ENCODE measurements at regions of chr20 and their contacts with region 1.

Region 1: GRCh38 chr20:62285722-62286121 is 17.1 kb upstream of the ADRM1 start:
- DNase-seq: no peak
- H3K4me3 ChIP-seq: no peak overlapping the region
- H3K4me3 Mint-ChIP-seq: no peak overlapping the region
- H3K27ac Mint-ChIP-seq: no peak overlapping the region
- H3K4me1 ChIP-seq: no peaks in the 10 kb centered on the region
- H3K4me1 Mint-ChIP-seq: no peaks in the 10 kb centered on the region
- H3K27me3 ChIP-seq: no peaks in the 10 kb centered on the region
- H3K27me3 Mint-ChIP-seq: no peaks in the 10 kb centered on the region
- CTCF ChIP-seq: no peak

Region 2: DNA sequence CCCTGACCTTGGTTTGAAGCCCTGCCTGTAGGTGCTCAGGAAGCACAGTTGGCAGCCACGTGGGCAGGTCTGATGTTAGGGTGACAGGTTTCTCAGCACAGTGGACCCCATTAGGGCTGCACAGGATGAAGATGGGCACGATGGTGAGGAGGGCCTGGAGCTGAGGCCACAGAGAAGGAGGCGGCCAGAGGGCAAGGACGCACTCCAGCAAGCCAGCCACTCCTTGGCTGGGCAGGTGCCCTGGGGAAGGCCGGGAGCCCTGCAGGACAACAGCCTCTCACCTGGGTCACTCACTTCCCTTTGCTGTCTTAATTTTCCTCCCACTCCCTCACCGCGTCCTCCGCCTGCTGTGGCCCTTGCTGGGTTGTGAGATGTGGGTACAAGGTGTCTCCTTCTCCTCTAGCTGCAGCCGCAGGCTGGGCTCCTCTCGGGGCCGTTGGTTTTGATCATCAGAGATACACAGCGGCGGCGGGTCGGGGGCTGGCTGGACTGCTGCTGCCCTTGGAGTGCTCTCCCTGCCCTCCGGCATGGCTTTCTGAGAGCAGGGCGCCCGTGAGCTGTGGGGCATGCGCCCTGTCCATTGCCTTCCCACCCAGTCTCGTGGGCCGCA is 41.7 kb before region 1 on chr20:
- CTCF ChIA-PET with region 1: interaction called, 10 read pairs
- POLR2A ChIA-PET with region 1: no interaction called
- intact Hi-C with region 1: no loop called
- DNase-seq: no peak
- H3K4me3 ChIP-seq: no peak overlapping the region
- H3K4me3 Mint-ChIP-seq: no peak overlapping the region
- H3K27ac Mint-ChIP-seq: no peak overlapping the region
- H3K4me1 ChIP-seq: peaks cover 5% of the 10 kb centered on the region
- H3K4me1 Mint-ChIP-seq: no peaks in the 10 kb centered on the region
- H3K27me3 ChIP-seq: no peaks in the 10 kb centered on the region
- H3K27me3 Mint-ChIP-seq: no peaks in the 10 kb centered on the region
- CTCF ChIP-seq: no peak

Region 3: GRCh38 chr20:62321521-62321948 is 35.8 kb after region 1 on chr20:
- CTCF ChIA-PET with region 1: no interaction called
- POLR2A ChIA-PET with region 1: no interaction called
- intact Hi-C with region 1: no loop called
- DNase-seq: peak; percentile 77 to 88
- H3K4me3 ChIP-seq: no peak overlapping the region
- H3K4me3 Mint-ChIP-seq: no peak overlapping the region
- H3K27ac Mint-ChIP-seq: no peak overlapping the region
- H3K4me1 ChIP-seq: no peaks in the 10 kb centered on the region
- H3K4me1 Mint-ChIP-seq: no peaks in the 10 kb centered on the region
- H3K27me3 ChIP-seq: no peaks in the 10 kb centered on the region
- H3K27me3 Mint-ChIP-seq: no peaks in the 10 kb centered on the region
- CTCF ChIP-seq: no peak

Region 4: DNA sequence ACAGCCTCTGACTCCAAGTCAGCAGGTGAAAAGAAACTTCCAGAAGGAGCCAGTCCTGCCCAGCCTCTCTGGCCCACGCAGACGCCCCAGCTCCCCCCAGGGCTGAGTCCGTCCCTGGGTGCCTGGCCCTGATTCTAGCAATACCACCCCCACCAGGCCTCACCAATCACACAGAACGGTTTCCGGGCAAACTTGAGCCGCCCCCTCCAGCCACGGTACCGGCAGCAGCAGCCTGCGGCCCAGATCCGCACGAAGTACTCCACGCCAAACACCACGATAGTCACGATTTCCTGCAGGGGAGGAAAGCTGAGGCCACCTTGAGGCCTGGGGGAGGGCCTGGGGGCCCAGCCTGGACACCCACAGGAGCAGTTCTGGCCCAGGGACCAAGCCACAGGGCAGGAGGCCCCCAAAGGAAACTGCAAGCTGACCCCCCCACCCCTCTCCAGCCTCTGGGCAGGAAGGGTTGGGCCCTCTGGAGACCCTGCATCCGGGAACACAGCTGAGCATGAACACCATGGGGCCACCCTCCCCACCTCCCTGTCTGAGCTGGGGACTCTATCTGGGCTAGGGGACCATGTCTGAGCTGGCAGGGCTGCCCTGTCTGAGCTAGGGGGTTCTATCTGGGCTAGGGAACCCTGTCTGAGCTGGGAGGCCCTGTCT is 1159.5 kb after region 1 on chr20:
- CTCF ChIA-PET with region 1: no interaction called
- POLR2A ChIA-PET with region 1: interaction called, 11 read pairs
- intact Hi-C with region 1: no loop called
- DNase-seq: no peak
- H3K4me3 ChIP-seq: no peak overlapping the region
- H3K4me3 Mint-ChIP-seq: no peak overlapping the region
- H3K27ac Mint-ChIP-seq: no peak overlapping the region
- H3K4me1 ChIP-seq: no peaks in the 10 kb centered on the region
- H3K4me1 Mint-ChIP-seq: no peaks in the 10 kb centered on the region
- H3K27me3 ChIP-seq: no peaks in the 10 kb centered on the region; the same call in 1 of the 2 replicates
- H3K27me3 Mint-ChIP-seq: peaks cover 14% of the 10 kb centered on the region
- CTCF ChIP-seq: no peak

Measured in Caco-2 (cell line).